ENCODE measurements at regions of chrX and their contacts with region 1.

Region 1: GRCh38 chrX:46554942-46555341 is 9.7 kb upstream of the ZNF674 start:
- DNase-seq: no peak
- ATAC-seq: no peak
- H3K4me3 ChIP-seq: no peak overlapping the region
- H3K27ac ChIP-seq: no peak overlapping the region
- H3K4me1 ChIP-seq: no peaks in the 10 kb centered on the region
- H3K27me3 ChIP-seq: no peaks in the 10 kb centered on the region
- CTCF ChIP-seq: peak in 11 of 12 donors; percentile 6 to 47 (median 34)
- POLR2A ChIP-seq: no peak

Region 2: DNA sequence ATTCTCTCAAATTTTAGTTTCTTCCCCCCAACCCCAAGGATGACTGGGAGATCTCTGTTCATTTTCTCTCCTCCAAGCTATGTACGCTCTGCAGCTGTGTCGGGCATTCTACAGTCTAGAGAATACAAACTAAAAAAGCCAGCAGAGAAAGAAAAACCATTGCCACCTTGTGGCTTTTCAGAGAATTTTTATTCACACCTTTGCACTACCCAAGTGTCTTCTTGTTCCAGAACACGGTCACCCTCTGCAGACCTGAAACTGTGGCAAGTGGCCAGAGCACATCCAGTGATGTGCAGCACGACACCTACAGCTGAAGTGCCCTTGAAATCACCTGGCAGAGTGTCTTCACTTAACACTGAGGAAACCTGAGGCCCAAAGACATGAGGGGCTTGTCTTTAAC is 87.2 kb after region 1 on chrX:
- intact Hi-C with region 1: loop called in 3 of 10 experiments (anchors 1 to 5 kb)
- DNase-seq: peak in 2 of 5 donors; percentile 17 to 37
- ATAC-seq: peak; percentile 83 to 93 (median 86)
- H3K4me3 ChIP-seq: no peak overlapping the region
- H3K27ac ChIP-seq: no peak overlapping the region
- H3K4me1 ChIP-seq: peaks cover 0 to 3% (median 0%) of the 10 kb centered on the region in 12 donors
- H3K27me3 ChIP-seq: peaks cover 0 to 3% (median 0%) of the 10 kb centered on the region in 9 donors
- CTCF ChIP-seq: peak; percentile 23 to 68 (median 52)
- POLR2A ChIP-seq: no peak

Region 3: DNA sequence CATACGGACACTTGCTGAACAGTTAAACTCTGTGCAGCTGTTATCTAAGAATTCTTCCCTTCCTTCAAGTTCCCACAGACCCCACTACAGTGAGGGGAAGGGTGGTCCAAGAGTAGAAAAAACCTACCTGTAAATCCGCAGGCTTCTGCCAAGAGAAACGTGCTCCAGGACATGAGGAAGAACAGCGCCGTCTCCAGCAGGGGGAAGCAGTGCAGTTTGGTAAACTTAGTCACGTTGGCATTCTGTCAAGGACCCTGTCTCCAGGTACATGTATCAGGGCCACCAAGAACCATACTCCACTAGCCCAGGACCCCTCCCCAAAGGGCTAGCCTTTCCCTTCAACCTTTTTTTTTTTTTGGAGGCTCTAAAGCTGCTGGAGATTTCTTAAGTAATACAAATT is 98.5 kb after region 1 on chrX:
- intact Hi-C with region 1: loop called in 1 of 10 experiments (anchors 5 kb)
- DNase-seq: no peak
- ATAC-seq: no peak
- H3K4me3 ChIP-seq: no peak overlapping the region
- H3K27ac ChIP-seq: no peak overlapping the region
- H3K4me1 ChIP-seq: peaks cover 0 to 22% (median 10%) of the 10 kb centered on the region in 12 donors
- H3K27me3 ChIP-seq: peaks cover 0 to 4% (median 0%) of the 10 kb centered on the region in 9 donors
- CTCF ChIP-seq: peak in 3 of 12 donors; percentile 10 to 22 (median 12)
- POLR2A ChIP-seq: no peak

Region 4: DNA sequence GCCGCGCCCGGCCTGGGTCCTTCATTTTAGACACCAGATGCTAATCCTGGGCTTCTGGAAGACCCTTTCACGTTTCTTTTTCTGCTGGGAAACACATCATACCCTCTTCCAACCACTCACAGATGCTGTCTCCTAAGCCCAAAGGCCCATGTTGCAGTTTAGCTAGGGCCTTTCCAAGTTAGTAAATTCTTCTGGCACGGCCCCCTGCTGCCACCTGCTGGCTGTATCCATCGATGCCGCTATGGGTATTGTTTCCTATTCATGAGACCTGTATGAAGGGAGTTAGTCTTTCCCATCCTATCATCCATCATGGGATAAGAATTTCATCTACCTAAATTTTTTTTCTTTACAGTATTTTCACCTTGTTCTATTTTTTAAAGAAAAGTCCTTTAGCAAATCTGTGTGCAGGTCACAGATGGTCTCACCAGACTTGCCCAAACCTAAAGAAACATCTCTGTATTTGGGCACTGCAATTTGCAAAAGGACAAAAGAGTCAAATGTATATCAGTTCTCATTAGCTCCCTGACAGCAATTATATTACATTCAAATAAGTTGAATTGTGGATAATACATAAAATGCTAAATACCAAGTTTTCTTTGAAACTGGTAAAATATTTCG is 241.7 kb after region 1 on chrX:
- intact Hi-C with region 1: loop called in 3 of 10 experiments (anchors 2 to 10 kb)
- DNase-seq: peak; percentile 50 to 78 (median 66)
- ATAC-seq: peak in 3 of 4 donors; percentile 59 to 76 (median 67)
- H3K4me3 ChIP-seq: no peak overlapping the region
- H3K27ac ChIP-seq: no peak overlapping the region
- H3K4me1 ChIP-seq: peaks cover 0 to 14% (median 0%) of the 10 kb centered on the region in 12 donors
- H3K27me3 ChIP-seq: peaks cover 0 to 5% (median 0%) of the 10 kb centered on the region in 9 donors
- CTCF ChIP-seq: peak; percentile 62 to 79 (median 70)
- POLR2A ChIP-seq: no peak

Measured in heart left ventricle (tissue), 16 donors.